Lower leg skin (tissue), 4 donors: ENCODE measurements at regions of chr6 and their contacts with region 1.

Region 1: GRCh38 chr6:32413427-32414047 is 6.6 kb upstream of the BTNL2 start:
- DNase-seq: peak; percentile 47 to 95
- H3K4me3 ChIP-seq: no peak overlapping the region
- CTCF ChIP-seq: peak in 1 of 3 donors; percentile 56
- POLR2A ChIP-seq: no peak

Region 2: GRCh38 chr6:32796848-32797776 is 383.6 kb after region 1 on chr6:
- intact Hi-C with region 1: loop called (anchors 10 kb)
- DNase-seq: peak; percentile 72 to 96
- H3K4me3 ChIP-seq: no peak overlapping the region
- CTCF ChIP-seq: peak in 1 of 3 donors; percentile 31
- POLR2A ChIP-seq: no peak

Region 3: DNA sequence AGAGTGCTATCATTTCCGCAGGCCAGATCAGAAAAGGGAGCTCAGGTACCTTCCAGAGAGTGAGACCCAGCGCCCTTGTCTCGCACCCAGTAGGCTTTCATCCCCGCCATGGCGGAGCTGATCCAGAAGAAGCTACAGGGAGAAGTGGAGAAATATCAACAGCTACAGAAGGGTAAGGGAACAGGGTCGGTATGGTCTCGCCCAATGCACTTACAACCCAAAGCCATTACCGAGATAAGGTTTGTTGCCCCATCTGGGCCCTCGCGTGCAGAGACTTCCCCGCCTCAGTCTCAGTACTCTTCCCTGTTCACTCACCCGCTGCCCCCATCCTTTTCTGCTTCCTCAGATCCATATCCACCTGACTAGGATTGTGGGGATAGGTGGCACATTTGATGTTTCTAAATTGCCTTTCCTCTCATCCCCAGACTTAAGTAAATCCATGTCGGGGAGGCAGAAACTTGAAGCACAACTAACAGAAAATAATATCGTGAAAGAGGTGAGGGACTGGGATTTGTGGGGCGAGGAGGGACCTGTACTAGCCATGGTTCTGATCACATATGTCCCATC is 876.3 kb after region 1 on chr6:
- intact Hi-C with region 1: loop called (anchors 5 kb)
- DNase-seq: no peak
- H3K4me3 ChIP-seq: peak overlapping the region; percentile 56
- CTCF ChIP-seq: no peak
- POLR2A ChIP-seq: no peak